Right lobe of liver (tissue), 6 donors: ENCODE measurements at regions of chr1 and their contacts with region 1.

Region 1: GRCh38 chr1:1122078-1122811 is 6.4 kb upstream of the C1orf159 start:
- DNase-seq: peak; percentile 84 to 88 (median 88)
- ATAC-seq: peak; percentile 83 to 89 (median 88)
- H3K4me3 ChIP-seq: no peak overlapping the region
- H3K27ac ChIP-seq: no peak overlapping the region
- H3K4me1 ChIP-seq: peaks cover 0 to 25% (median 12%) of the 10 kb centered on the region in 4 donors
- H3K27me3 ChIP-seq: no peaks in the 10 kb centered on the region
- CTCF ChIP-seq: peak; percentile 91 to 95 (median 93)
- POLR2A ChIP-seq: no peak

Region 2: DNA sequence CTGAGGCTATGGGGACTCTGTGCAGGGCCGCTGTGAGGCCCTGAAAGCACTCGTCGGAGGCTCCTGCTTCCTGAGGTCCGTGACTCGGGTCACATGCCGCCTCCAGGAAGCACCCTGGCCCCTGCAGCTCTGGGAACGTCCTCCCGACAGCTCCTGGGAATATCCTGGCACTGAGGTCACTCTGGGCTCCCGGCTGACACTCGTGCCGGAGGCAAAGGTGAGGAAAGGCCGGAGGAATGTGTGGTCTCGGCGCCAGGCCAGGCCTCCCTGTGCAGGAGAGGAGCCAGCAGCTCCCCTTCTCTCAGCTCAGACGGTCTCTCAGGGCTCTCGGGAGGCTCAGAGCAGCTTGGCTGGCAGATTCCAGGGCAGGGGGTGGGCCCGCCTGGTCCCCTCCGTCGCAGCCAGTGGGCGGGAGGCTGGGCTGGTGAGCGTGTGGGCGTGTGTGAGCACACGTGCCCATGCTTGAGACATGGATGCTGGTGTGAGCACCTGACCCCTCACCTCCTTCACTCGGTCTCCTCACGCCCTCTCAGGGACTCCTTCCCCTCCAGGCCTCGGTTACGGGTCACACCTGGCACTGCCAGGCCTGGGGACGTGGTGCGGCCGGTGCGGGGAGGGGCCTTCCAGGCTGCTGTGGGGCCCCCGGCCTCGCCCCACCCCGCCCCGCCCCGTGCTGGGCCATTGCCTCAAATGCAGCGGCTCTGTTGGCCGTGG is 42.7 kb before region 1 on chr1:
- intact Hi-C with region 1: no loop called
- DNase-seq: peak; percentile 75 to 88 (median 83)
- ATAC-seq: peak; percentile 81 to 91 (median 86)
- H3K4me3 ChIP-seq: peak overlapping the region in 1 of 3 donors; percentile 11
- H3K27ac ChIP-seq: peak overlapping the region in 1 of 3 donors; percentile 18
- H3K4me1 ChIP-seq: peaks cover 0 to 11% (median 7%) of the 10 kb centered on the region in 4 donors
- H3K27me3 ChIP-seq: no peaks in the 10 kb centered on the region
- CTCF ChIP-seq: no peak
- POLR2A ChIP-seq: no peak

Region 3: GRCh38 chr1:1225238-1225845 is 103.1 kb after region 1 on chr1:
- intact Hi-C with region 1: loop called in 1 of 2 experiments (anchors 5 kb)
- DNase-seq: no peak
- ATAC-seq: peak in 1 of 4 donors; percentile 5
- H3K4me3 ChIP-seq: no peak overlapping the region
- H3K27ac ChIP-seq: no peak overlapping the region
- H3K4me1 ChIP-seq: peaks cover 0 to 9% (median 3%) of the 10 kb centered on the region in 4 donors
- H3K27me3 ChIP-seq: no peaks in the 10 kb centered on the region
- CTCF ChIP-seq: no peak
- POLR2A ChIP-seq: no peak

Region 4: DNA sequence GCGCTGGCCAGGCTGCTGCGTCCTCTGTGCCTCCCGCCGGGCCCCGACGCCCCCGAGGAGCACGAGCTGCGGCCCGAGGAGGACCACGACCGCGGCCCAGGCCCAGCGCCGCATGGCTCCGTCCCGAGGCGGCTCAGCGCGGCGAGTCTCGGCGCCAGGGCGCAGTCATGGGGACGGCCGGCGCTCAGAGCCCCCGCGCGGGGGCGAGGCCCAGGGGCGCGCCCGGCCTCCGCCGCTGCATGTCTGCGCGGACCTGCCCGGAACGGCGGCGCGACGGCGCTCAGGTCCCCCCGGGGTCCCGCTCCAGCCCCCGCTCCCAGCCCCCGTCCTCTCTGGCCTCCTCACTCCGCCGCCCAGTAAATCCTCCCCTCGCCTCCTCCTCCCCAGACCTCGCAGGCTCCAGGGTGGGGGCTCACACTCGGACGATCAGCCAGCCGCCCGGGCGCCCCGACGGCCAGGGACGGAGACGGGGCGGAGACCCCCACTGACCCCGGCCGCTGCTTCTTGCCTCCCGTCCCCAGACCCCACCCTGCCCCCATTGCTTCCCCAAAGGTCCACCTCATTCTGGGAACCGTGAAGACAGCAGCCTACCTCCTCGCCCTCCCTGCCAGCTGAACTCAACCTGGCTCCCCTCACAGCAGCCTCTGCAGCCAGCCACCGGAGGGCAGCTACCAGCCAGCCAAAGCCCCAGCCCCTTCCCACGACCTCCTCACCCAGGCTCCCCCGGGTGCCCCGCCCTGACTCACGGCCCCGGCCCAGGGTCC is 124.5 kb after region 1 on chr1 and contains the start of gene C1QTNF12:
- intact Hi-C with region 1: loop called in 1 of 2 experiments (anchors 5 kb)
- DNase-seq: peak in 1 of 3 donors; percentile 48
- ATAC-seq: peak in 2 of 4 donors; percentile 8 to 28
- H3K4me3 ChIP-seq: no peak within 1 kb of the TSS
- H3K27ac ChIP-seq: no peak within 1 kb of the TSS
- H3K4me1 ChIP-seq: no peaks in the 10 kb centered on the region
- H3K27me3 ChIP-seq: no peaks in the 10 kb centered on the region
- CTCF ChIP-seq: no peak
- POLR2A ChIP-seq: no peak
- total RNA-seq, gene C1QTNF12: 0.40 to 4.0 (median 1.1) TPM in 5 of 6 experiments, not detected in the other

Region 5: DNA sequence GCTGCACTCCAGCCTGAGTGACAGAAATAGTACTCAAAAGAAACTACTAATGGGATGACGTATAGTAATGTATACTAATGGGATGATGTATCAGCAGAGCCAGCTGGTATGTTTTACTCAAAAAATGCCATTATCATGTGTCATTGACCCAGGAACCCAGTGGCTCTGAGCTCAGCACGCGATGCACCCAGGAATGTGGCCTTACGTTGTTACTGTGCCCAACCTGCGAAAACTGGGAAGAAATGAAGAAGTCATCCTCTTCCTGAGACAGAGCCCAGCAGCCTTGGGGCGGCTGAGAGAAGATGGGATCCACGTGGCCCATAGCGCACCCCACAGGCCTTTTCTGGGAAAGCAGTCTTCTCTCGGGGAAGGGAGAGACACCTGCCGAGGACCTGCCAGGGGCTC is 142.6 kb after region 1 on chr1:
- intact Hi-C with region 1: loop called in 1 of 2 experiments (anchors 10 kb)
- DNase-seq: no peak
- ATAC-seq: no peak
- H3K4me3 ChIP-seq: no peak overlapping the region
- H3K27ac ChIP-seq: no peak overlapping the region
- H3K4me1 ChIP-seq: no peaks in the 10 kb centered on the region
- H3K27me3 ChIP-seq: no peaks in the 10 kb centered on the region
- CTCF ChIP-seq: peak in 1 of 4 donors; percentile 8
- POLR2A ChIP-seq: no peak

Region 6: DNA sequence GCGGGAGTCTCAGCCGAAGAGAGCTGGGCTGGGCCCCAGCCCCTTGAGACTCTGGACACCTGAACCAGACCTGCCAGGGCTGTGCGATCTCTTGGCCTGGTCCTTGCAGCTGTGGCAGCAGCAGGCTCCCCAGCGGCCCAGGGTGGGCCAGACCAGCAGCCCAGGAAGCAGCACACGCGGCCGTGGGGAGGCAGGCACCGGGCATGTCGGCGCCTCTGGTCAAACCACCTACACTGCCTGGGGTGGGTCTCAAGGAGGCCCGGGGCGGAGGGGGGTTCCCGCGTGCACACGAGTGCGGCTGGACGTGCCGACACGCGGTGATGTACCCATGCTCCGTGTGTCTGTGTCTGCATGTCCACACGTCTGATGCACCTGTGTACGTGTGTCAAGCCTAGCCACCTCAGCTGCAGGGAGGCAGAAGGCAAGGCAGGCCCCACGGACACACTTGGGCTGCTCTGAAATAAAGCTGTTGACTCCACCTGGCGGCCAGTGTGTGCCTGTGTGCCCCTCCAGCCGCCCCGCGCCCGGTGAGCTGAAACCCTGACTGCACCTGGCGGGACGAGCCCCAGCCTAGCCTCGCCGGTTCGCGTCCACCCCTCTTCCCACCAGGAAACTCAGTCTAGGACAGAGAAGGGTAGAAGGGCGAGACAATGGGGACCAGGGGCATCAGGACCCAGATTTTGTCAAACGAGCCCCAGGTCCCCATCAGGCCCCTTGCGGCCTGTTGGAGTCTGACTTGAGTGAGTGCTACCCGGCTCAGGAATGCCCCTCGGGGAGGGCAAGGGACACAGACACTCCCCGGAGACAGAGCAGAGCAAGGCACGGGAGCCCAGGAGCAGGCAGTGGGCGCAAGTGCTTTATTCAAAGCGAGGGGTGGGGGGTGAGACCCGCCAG is 169.6 kb after region 1 on chr1:
- intact Hi-C with region 1: loop called (anchors 5 kb)
- DNase-seq: peak; percentile 75 to 79 (median 77)
- ATAC-seq: peak; percentile 58 to 80 (median 78)
- H3K4me3 ChIP-seq: no peak overlapping the region
- H3K27ac ChIP-seq: no peak overlapping the region
- H3K4me1 ChIP-seq: no peaks in the 10 kb centered on the region
- H3K27me3 ChIP-seq: no peaks in the 10 kb centered on the region
- CTCF ChIP-seq: peak; percentile 51 to 65 (median 58)
- POLR2A ChIP-seq: no peak